HEK293 (cell line): ENCODE measurements at regions of chr19 and their contacts with region 1.

Region 1: GRCh38 chr19:33226550-33227241 is 1.0 kb upstream of the SLC7A10 start:
- H3K4me3 ChIP-seq: no peak overlapping the region
- H3K27ac ChIP-seq: no peak overlapping the region
- H3K4me1 ChIP-seq: peaks cover 2% of the 10 kb centered on the region; the same call in 1 of the 2 replicates
- CTCF ChIP-seq: no peak

Region 2: DNA sequence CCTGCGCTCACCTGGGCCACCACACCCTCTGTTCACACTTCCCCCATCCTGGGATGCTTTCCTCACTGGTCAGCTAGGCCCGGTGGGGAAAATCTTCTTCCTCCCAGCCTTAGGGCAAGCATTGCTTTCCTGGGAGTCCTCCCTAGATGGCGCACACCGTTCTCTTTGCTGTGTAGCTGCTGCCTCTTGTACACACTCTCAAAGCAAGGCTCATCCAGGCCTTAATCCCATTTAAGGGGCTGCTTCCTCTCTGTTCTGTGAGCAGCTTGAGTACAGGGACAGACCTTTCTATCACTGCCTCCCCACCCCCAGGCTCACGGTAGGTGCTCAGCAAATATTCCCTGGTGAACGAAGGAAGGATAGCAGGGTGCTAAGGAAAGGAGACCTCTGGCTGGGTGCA is 12.1 kb before region 1 on chr19:
- CTCF ChIA-PET with region 1: interaction called, 13 read pairs
- POLR2A ChIA-PET with region 1: interaction called, 5 read pairs
- H3K4me3 ChIP-seq: no peak overlapping the region
- H3K27ac ChIP-seq: peak overlapping the region; percentile 31; the same call in 1 of the 2 replicates
- H3K4me1 ChIP-seq: peaks cover 2% of the 10 kb centered on the region; the same call in 1 of the 2 replicates
- CTCF ChIP-seq: peak; percentile 82

Region 3: DNA sequence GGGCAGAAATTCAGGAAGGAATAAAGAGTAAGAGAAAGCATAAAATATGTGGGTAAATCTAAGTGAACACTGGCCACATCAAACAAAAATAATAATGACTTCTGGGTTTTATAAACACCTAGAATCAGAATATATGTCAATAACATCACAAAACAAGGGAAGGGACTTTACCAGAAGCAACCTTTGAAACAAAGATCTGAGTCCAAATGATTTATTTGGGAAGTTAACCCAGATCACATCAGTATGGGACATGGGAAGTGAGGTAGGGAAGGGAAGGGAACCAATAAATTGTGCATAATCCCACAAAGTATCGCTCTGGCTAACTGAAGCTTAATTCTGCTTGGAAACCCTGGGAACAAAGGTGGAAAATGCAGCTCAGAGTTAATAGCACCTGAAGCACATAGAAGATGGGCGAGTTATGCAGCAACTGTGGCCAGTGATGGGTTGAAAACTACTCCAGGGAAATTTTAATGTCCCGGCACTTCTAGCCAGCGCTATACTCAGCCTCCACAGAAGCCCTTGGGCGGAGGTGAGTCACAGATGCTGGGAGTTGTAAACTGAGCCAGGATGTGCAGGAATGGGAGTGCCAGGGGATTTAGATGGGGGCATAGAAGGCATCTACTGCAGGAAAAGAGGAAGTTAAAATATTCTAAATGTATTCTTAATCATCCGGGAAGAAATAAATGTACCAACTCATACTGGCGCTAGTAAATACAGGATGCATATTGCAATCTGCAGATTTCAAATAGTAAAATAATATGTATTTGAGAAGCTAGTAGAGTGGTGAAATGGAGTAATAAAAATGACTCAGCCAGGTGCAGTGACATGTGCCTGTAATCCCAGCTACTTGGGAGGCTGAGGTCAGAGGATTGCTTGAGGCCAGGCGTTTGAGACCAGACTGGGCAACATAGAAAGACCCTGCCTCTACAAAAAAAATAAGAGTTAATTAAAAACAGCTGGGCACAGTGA is 112.6 kb after region 1 on chr19:
- CTCF ChIA-PET with region 1: no interaction called
- POLR2A ChIA-PET with region 1: no interaction called
- H3K4me3 ChIP-seq: no peak overlapping the region
- H3K27ac ChIP-seq: no peak overlapping the region
- H3K4me1 ChIP-seq: peaks cover 3% of the 10 kb centered on the region; the same call in 1 of the 2 replicates
- CTCF ChIP-seq: no peak